Mucosa of descending colon (tissue), 3 donors: ENCODE measurements at regions of chr18 and their contacts with region 1.

Region 1: DNA sequence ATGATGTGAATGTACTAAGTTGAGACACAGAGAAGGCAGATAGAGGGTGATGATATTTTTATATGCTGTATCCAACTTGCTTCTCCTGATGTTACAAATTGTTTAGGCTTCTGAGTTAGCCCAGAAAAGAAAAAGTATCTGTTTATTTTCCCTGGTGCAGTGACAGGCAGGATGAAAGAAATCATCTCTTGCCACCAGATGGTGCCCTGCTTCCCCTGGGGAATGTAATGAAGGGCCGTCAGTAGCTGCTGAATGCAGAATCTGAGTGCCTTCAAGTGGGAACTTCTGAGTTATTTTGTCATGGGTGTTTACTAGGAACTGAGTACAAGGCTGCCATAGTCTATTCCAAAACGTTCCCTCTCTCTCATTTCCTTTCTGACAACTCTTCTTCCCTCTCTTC is 525.6 kb downstream of the MBD2 start:
- DNase-seq: peak in 2 of 3 donors; percentile 23 to 79
- ATAC-seq: peak; percentile 64
- H3K4me3 ChIP-seq: no peak overlapping the region
- H3K4me1 ChIP-seq: no peaks in the 10 kb centered on the region
- CTCF ChIP-seq: no peak

Region 2: GRCh38 chr18:53526101-53526870 is 172.6 kb before region 1 on chr18:
- intact Hi-C with region 1: no loop called
- DNase-seq: no peak
- ATAC-seq: no peak
- H3K4me3 ChIP-seq: no peak overlapping the region
- H3K4me1 ChIP-seq: no peaks in the 10 kb centered on the region
- CTCF ChIP-seq: no peak

Region 3: GRCh38 chr18:53864770-53865169 is 165.9 kb after region 1 on chr18:
- intact Hi-C with region 1: loop called in 1 of 2 experiments (anchors 5 kb)
- DNase-seq: peak in 1 of 3 donors; percentile 24
- ATAC-seq: no peak
- H3K4me3 ChIP-seq: no peak overlapping the region
- H3K4me1 ChIP-seq: no peaks in the 10 kb centered on the region
- CTCF ChIP-seq: no peak

Region 4: DNA sequence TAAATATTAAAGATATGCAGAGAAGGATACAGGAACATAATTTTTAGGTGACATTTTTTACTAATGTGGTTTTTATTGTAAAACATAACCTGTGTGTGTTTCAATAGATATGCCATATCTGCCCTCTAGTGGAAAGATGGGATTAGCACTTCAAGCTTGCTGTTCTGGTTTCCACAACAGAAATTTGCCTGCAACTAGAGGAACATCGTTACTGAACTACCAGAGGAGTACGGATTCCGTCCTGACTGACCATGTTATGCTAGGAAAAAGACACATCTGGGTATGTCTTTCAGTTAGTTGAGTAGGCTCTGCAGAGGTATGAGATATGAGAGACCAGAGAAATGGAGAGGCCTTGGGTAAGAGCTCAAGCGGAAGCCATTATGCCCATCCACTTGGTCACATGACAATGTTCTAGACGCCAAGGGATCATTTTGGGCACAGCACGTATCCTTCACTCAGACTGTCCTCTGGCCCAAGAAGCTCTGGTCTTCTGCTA is 420.7 kb after region 1 on chr18:
- intact Hi-C with region 1: loop called in 1 of 2 experiments (anchors 10 kb)
- DNase-seq: peak in 1 of 3 donors; percentile 53
- ATAC-seq: peak; percentile 73
- H3K4me3 ChIP-seq: no peak overlapping the region
- H3K4me1 ChIP-seq: no peaks in the 10 kb centered on the region
- CTCF ChIP-seq: peak; percentile 24